GM18951 (cell line): ENCODE measurements at regions of chr5 and their contacts with region 1.

Region 1: DNA sequence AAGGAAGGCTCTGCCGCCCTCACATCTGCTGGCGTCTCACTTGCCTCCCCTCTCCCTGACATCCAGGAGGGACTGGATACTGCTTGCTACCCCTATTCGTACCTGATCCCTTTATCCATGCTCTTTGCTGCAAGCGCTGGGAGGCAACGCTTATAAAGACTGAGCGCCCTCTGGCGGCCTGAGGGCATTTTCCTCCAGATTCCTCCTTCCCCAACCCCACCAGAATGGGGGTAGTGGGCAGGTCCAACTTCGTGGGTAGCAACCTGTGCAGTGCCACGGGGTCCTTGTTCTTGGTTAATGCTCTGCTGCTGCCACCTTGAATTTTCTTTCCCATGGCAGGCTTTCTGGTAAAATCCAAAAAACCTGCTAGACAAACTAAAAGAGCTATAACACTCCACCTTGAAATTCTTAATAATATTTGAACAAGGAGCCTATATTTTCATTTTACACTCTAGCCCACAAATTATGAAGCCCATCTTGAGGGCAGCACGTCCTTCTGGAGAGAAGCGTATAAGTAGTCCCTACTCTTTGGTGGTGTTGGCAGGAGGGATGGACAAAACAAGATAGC is 52.4 kb downstream of the JADE2 start:
- POLR2A ChIP-seq: no peak

Region 2: GRCh38 chr5:134304311-134304710 is 273.6 kb before region 1 on chr5:
- in situ Hi-C with region 1: loop called (anchors 5 kb)
- POLR2A ChIP-seq: no peak